Naive thymus-derived CD4-positive, alpha-beta T cell (primary cell): ENCODE measurements at regions of chr2 and their contacts with region 1.

Region 1: GRCh38 chr2:206274434-206275268 is at the start of gene ZDBF2:
- DNase-seq: peak; percentile 29 to 70 (median 62)
- ATAC-seq: peak; percentile 80
- H3K4me3 ChIP-seq: peak within 1 kb of the TSS; percentile 56
- H3K4me3 Mint-ChIP-seq: peak within 1 kb of the TSS; percentile 85 to 94 (median 91)
- H3K27ac ChIP-seq: peak within 1 kb of the TSS; percentile 79
- H3K27ac Mint-ChIP-seq: peak within 1 kb of the TSS; percentile 85 to 96 (median 94)
- H3K4me1 ChIP-seq: peaks cover 8 to 14% of the 10 kb centered on the region in 2 donors
- H3K4me1 Mint-ChIP-seq: peaks cover 9 to 25% (median 20%) of the 10 kb centered on the region in 7 donors
- H3K27me3 ChIP-seq: peaks cover 0 to 6% of the 10 kb centered on the region in 2 donors
- H3K27me3 Mint-ChIP-seq: peaks cover 14 to 69% (median 51%) of the 10 kb centered on the region in 5 donors
- total RNA-seq, gene ZDBF2: 9.1 to 22.4 (median 16.0) TPM

Region 2: GRCh38 chr2:205323929-205324328 is 950.7 kb before region 1 on chr2:
- CTCF ChIA-PET with region 1: no interaction called
- POLR2A ChIA-PET with region 1: no interaction called
- intact Hi-C with region 1: no loop called
- DNase-seq: no peak
- ATAC-seq: no peak
- H3K4me3 ChIP-seq: no peak overlapping the region
- H3K4me3 Mint-ChIP-seq: no peak overlapping the region
- H3K27ac ChIP-seq: no peak overlapping the region
- H3K27ac Mint-ChIP-seq: no peak overlapping the region
- H3K4me1 ChIP-seq: no peaks in the 10 kb centered on the region
- H3K4me1 Mint-ChIP-seq: no peaks in the 10 kb centered on the region
- H3K27me3 ChIP-seq: no peaks in the 10 kb centered on the region
- H3K27me3 Mint-ChIP-seq: peaks cover 0 to 30% (median 0%) of the 10 kb centered on the region in 5 donors

Region 3: DNA sequence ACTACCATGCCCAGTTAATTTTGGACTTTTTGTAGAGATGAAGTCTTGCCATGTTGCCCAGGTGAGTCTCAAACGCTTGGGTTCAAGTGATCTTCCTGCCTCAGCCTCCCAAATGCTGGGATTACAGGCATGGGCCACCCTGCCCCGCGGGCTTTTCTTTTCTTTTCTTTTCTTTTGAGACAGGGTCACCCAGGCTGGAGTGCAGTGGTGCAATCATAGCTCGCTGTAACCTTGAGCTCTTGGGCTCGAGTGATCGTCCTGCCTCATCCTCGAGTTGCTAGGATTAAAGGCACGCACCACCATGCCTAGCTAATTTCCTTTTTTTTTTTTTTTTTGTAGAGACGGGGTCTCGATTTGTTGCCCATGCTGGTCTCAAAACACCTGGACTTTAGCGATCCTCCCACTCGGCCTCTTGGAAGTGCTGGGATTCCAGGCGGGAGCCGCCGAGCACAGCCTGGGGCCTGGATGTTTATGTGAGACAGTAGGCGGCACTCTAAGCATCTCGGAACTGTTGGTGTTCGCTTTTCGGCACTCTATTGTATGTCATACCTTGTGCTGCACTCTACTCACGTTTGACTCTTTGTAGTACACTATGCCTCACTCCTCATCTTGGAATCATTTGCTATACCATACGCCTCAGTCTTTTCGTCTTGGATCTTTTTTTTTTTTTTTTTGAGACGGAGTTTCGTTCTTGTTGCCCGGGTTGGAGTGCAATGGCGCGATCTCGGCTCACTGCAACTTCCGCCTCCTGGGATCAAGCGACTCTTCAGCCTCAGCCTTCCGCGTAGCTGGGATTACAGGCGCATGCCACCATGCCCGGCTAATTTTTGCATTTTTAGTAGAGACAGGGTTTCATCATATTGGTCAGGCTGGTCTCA is 24.7 kb before region 1 on chr2:
- CTCF ChIA-PET with region 1: no interaction called
- POLR2A ChIA-PET with region 1: no interaction called
- intact Hi-C with region 1: no loop called
- DNase-seq: no peak
- ATAC-seq: peak; percentile 59
- H3K4me3 ChIP-seq: no peak overlapping the region
- H3K4me3 Mint-ChIP-seq: peak overlapping the region; percentile 67 to 87 (median 80)
- H3K27ac ChIP-seq: no peak overlapping the region
- H3K27ac Mint-ChIP-seq: no peak overlapping the region
- H3K4me1 ChIP-seq: no peaks in the 10 kb centered on the region
- H3K4me1 Mint-ChIP-seq: peaks cover 0 to 16% (median 8%) of the 10 kb centered on the region in 7 donors
- H3K27me3 ChIP-seq: peaks cover 0 to 7% of the 10 kb centered on the region in 2 donors
- H3K27me3 Mint-ChIP-seq: peaks cover 47 to 61% (median 53%) of the 10 kb centered on the region in 5 donors

Region 4: GRCh38 chr2:206260188-206261012 is 14.3 kb before region 1 on chr2:
- CTCF ChIA-PET with region 1: no interaction called
- POLR2A ChIA-PET with region 1: no interaction called
- intact Hi-C with region 1: loop called in 1 of 2 experiments (anchors 2 kb)
- DNase-seq: no peak
- ATAC-seq: peak; percentile 52
- H3K4me3 ChIP-seq: no peak overlapping the region
- H3K4me3 Mint-ChIP-seq: no peak overlapping the region
- H3K27ac ChIP-seq: no peak overlapping the region
- H3K27ac Mint-ChIP-seq: no peak overlapping the region
- H3K4me1 ChIP-seq: no peaks in the 10 kb centered on the region
- H3K4me1 Mint-ChIP-seq: peaks cover 0 to 12% (median 9%) of the 10 kb centered on the region in 7 donors
- H3K27me3 ChIP-seq: peaks cover 6 to 22% of the 10 kb centered on the region in 2 donors
- H3K27me3 Mint-ChIP-seq: peaks cover 65 to 82% (median 70%) of the 10 kb centered on the region in 5 donors

Region 5: DNA sequence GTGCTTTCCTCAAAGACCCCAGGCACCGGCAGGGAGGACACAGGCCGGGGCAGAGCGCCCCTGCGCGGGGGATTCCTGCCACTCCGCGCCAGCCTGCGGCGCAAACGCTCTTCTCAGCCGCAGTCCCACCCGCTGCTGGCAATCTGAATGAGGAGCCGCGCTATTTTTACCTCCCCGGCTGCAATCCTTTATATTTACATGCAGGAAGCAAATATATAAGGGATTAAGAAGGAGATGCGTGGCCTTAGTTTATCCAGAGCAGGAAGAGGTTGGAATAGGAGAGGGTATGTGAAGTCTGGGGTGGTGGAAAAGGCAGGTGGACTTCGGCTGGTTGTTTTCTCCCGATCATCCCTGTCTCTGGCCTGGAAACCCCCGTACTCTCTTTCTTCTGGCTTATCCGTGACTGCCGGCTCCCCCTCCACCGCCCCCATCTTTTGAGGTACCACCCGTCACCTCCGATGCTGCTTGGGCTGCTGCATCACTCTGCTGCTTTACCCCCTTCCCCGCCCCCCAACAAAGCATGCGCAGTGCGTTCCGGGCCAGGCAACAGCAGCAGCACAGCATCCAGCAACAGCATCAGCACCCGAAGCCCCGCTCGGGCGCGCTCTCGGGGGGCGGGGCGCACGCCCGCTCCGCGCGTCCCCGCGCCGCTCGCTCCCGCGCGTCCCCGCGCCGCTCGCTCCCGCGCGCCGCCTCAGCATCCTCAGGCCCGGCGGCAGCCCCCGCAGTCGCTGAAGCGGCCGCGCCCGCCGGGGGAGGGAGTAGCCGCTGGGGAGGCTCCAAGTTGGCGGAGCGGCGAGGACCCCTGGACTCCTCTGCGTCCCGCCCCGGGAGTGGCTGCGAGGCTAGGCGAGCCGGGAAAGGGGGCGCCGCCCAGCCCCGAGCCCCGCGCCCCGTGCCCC is 168.4 kb after region 1 on chr2 and contains the start of gene ADAM23:
- CTCF ChIA-PET with region 1: no interaction called
- POLR2A ChIA-PET with region 1: no interaction called
- intact Hi-C with region 1: no loop called
- DNase-seq: peak in 8 of 9 donors; percentile 22 to 56 (median 34)
- ATAC-seq: peak; percentile 80
- H3K4me3 ChIP-seq: no peak within 1 kb of the TSS
- H3K4me3 Mint-ChIP-seq: peak within 1 kb of the TSS; percentile 66 to 89 (median 82)
- H3K27ac ChIP-seq: no peak within 1 kb of the TSS
- H3K27ac Mint-ChIP-seq: peak within 1 kb of the TSS in 4 of 9 donors; percentile 15 to 74 (median 29)
- H3K4me1 ChIP-seq: peaks cover 4 to 8% of the 10 kb centered on the region in 2 donors
- H3K4me1 Mint-ChIP-seq: peaks cover 5 to 21% (median 15%) of the 10 kb centered on the region in 7 donors
- H3K27me3 ChIP-seq: peaks cover 8 to 9% of the 10 kb centered on the region in 2 donors
- H3K27me3 Mint-ChIP-seq: peaks cover 67 to 80% (median 74%) of the 10 kb centered on the region in 5 donors
- total RNA-seq, gene ADAM23: 0.22 to 5.6 (median 2.5) TPM

Region 6: DNA sequence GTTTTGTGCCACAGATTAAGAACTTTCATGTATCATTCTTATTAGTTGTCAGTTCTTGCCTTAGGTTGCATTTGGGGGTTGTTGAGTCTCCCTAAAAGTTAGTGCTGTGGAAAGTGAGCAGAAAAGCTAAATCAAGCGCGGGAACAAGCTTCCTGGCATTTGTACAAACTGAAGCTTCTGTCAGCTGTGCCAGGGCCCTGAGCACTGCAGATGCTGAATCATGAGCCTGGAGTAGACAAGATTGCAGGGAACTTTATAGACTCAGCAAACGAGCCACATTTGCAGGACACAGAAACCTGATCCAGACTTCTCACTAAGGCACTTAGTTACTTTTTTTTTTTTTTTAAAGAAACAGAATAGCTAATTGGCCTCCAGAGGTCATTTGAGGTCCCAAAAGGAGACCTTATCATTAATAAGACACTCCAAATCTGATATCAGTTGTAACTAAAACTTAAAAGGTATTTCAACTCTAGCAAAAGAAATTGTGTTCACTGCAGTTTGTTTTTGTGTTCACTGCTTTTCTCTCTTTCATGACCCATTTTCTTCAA is 257.4 kb after region 1 on chr2:
- CTCF ChIA-PET with region 1: no interaction called
- POLR2A ChIA-PET with region 1: no interaction called
- intact Hi-C with region 1: loop called in 1 of 2 experiments (anchors 10 kb)
- DNase-seq: no peak
- ATAC-seq: no peak
- H3K4me3 ChIP-seq: no peak overlapping the region
- H3K4me3 Mint-ChIP-seq: no peak overlapping the region
- H3K27ac ChIP-seq: no peak overlapping the region
- H3K27ac Mint-ChIP-seq: peak overlapping the region in 3 of 9 donors; percentile 74 to 95 (median 84)
- H3K4me1 ChIP-seq: peaks cover 0 to 8% of the 10 kb centered on the region in 2 donors
- H3K4me1 Mint-ChIP-seq: peaks cover 7 to 28% (median 18%) of the 10 kb centered on the region in 7 donors
- H3K27me3 ChIP-seq: no peaks in the 10 kb centered on the region
- H3K27me3 Mint-ChIP-seq: peaks cover 9 to 58% (median 20%) of the 10 kb centered on the region in 5 donors